Activated CD8-positive, alpha-beta memory T cell treated with anti-CD3 and anti-CD28 coated beads, Interleukin-2, amount 10 ng/mL, durations not matched to agents 7 days and 5 days (primary cell): ENCODE measurements at regions of chr14 and their contacts with region 1.

Region 1: GRCh38 chr14:50060871-50061663 is 55.3 kb downstream of the VCPKMT start:
- DNase-seq: peak; percentile 81
- ATAC-seq: peak; percentile 25
- H3K4me3 Mint-ChIP-seq: peak overlapping the region; percentile 92
- H3K27ac Mint-ChIP-seq: peak overlapping the region; percentile 100
- H3K4me1 Mint-ChIP-seq: peaks cover 82% of the 10 kb centered on the region
- H3K27me3 Mint-ChIP-seq: no peaks in the 10 kb centered on the region

Region 2: DNA sequence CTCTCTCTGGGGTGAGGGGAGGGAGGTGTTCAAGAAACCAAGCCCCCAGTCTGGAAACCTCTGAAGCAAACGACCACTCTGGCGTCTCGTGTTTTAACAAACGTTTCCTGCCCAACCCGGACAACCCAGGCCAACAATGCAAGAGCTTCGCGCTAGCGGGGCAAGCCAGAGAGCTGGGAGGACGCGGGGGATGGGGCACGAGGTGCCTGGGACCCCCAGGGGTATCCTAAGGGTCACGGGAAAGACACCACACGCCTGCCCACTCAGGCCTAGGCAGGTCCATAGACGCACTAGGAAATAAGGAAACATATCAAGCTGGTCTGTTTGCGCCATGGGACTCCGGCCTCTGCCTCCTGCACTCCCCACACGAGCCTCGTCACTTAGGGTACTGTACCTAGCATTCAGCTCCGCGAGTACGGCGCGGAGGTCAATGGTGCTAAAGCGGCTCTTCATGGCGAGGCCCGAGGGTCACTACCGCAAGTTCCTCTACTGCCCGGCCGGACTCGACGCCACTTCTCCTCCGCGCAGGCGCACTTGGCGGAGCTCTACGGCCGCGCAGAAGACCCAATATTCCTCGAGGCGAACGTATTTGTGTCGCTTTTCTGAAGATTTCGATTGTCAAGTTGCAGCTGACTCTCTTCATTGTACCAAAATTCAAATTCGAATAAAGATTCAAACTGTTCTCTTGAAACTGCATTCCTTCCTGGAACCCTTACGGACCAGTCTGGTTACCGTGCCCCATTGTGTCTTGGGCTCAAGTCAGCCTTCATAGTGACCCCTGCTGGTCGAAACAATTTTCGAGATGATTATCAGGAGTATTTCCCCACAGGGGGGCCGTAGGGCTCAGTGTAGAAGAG is 208.5 kb before region 1 on chr14 and contains the start of gene NEMF:
- CTCF ChIA-PET with region 1: interaction called, 23 read pairs
- DNase-seq: peak; percentile 88
- ATAC-seq: peak; percentile 86
- H3K4me3 Mint-ChIP-seq: peak within 1 kb of the TSS; percentile 92
- H3K27ac Mint-ChIP-seq: peak within 1 kb of the TSS; percentile 96
- H3K4me1 Mint-ChIP-seq: peaks cover 43% of the 10 kb centered on the region
- H3K27me3 Mint-ChIP-seq: no peaks in the 10 kb centered on the region
- total RNA-seq, gene NEMF: 78.7 to 82.8 TPM

Region 3: DNA sequence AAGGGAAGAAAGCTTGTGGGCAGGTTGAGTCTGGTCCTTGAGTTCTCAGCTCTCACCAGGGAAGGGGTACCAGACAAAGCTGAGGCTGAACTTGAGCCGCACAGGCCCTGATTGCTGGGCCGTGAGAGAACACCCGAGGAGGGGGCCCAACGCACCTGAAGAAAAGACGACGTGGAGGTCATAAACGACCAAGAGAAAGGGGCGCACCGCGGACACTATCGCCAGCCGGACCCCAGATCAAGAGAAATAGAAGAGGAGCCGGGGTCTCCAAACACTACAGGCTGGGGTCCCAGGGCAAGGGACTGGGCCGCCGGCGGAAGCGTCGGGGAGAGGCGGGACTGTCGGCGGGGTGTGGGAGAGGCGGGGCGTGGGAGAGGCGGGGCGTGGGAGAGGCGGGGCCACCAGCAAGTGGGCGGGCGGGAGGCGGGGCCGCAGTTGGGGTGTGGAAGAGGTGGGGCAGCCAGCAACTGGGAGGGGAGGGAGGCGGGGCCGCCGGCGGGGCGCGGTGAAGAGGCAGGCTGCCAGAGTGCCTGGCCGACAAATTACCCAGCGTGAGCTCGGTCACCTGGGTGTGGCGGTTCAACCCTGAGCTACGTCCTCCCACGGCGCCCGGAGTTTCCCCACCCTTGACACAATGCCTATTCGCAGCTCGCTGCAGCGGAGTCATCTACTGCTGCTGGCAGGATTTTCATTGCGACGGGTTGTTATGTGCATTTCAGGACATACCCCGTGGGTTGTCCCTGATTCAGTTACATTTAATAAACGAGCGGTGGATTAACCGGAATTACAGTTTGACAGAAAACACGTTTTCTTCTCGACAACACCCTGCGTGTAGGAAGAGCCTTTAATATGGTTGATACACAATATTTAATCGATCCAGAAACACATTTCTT is 193.0 kb before region 1 on chr14:
- CTCF ChIA-PET with region 1: interaction called, 59 read pairs
- DNase-seq: peak; percentile 99
- ATAC-seq: peak; percentile 93
- H3K4me3 Mint-ChIP-seq: peak overlapping the region; percentile 98
- H3K27ac Mint-ChIP-seq: peak overlapping the region; percentile 100
- H3K4me1 Mint-ChIP-seq: peaks cover 30% of the 10 kb centered on the region
- H3K27me3 Mint-ChIP-seq: no peaks in the 10 kb centered on the region

Region 4: DNA sequence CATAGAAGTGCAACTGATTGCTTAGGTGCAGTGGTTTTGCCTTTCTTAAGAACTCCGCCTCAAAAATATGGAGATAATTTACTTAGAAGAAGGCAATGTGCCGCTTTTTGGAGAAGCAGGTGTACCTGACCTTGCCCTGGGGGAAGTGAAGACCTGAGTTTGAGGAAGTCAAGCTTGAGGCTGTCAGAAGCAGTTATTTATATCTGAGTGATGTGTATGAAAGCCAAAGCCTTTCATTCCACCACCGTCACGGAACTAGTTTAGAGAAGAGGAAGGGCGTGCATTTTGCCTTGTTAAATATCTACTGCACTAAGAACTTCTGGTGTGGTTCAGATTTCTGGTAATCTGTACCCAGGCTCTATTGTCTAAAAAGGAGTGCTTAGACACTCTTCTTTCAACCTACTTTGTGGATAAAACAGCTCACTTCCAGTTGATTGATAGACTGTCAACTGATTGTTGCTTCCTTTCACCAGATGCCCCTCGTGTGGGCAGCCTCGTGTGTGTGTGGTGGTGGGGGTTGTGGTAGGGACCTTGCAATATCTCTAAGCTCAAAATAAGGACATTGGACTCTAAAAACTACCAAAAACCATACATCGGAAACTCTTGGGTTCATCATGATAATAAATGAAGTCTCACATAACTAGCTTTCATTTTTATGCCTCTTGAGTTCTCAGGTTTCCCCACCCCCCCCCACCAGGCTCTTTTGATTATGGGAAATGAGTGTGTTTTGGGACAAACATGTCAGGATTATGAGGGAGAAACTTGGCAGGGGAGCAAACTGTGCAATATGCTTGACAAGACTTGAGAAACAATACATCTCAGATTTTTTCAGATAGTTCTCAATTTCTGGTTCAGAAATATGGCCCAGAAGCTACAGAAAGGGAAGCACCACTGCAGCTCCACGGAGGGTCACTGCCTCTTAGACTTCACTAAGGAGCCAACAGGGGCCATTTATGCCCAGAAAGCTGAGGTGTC is 89.6 kb before region 1 on chr14:
- CTCF ChIA-PET with region 1: interaction called, 15 read pairs
- DNase-seq: peak; percentile 87
- ATAC-seq: peak; percentile 66
- H3K4me3 Mint-ChIP-seq: peak overlapping the region; percentile 74
- H3K27ac Mint-ChIP-seq: peak overlapping the region; percentile 99
- H3K4me1 Mint-ChIP-seq: peaks cover 67% of the 10 kb centered on the region
- H3K27me3 Mint-ChIP-seq: no peaks in the 10 kb centered on the region

Region 5: DNA sequence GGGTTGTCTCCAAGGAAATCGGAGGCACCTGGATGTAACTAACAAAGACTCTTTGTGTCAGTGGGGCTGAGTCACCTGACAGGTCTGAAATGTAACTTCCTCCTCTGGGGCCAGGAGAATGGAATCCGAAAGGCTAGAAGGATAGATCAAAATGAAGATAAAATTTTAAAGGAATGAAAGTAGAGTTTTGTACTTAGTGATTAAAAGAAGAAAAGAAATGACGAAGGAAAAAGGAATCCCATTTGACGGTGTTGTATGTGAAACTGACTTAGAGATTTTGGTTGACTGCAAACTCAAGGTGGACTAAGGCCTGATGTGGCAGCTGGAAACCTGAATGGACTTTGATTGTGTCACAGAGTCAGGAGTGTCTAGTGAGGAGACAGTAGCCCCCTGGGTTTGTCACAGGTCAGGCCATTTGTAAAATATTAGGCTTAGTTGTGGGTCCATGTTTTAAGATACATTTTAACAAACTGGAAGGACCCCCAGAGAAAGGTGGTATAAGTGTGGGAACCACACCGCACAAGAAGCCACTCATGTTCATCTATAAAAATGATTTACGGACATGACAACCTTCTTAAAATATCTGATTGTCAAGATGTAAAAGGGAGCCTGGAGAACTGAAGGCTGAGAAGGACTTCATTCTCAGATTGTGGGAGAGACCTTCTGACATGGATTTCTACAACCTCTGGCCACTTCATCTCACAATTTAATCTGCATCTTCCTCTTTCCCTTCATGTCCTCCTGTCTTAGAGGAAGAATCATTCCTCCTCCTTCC is 47.3 kb before region 1 on chr14:
- CTCF ChIA-PET with region 1: no interaction called
- DNase-seq: no peak
- ATAC-seq: no peak
- H3K4me3 Mint-ChIP-seq: no peak overlapping the region
- H3K27ac Mint-ChIP-seq: no peak overlapping the region
- H3K4me1 Mint-ChIP-seq: peaks cover 28% of the 10 kb centered on the region
- H3K27me3 Mint-ChIP-seq: no peaks in the 10 kb centered on the region

Region 6: GRCh38 chr14:50045039-50045711 is 15.9 kb before region 1 on chr14:
- CTCF ChIA-PET with region 1: interaction called, 32 read pairs
- DNase-seq: peak; percentile 95
- ATAC-seq: peak; percentile 87
- H3K4me3 Mint-ChIP-seq: peak overlapping the region; percentile 2
- H3K27ac Mint-ChIP-seq: peak overlapping the region; percentile 91
- H3K4me1 Mint-ChIP-seq: peaks cover 63% of the 10 kb centered on the region
- H3K27me3 Mint-ChIP-seq: no peaks in the 10 kb centered on the region

Region 7: GRCh38 chr14:50072395-50072794 is 11.3 kb after region 1 on chr14:
- CTCF ChIA-PET with region 1: no interaction called
- DNase-seq: no peak
- ATAC-seq: no peak
- H3K4me3 Mint-ChIP-seq: no peak overlapping the region
- H3K27ac Mint-ChIP-seq: no peak overlapping the region
- H3K4me1 Mint-ChIP-seq: peaks cover 41% of the 10 kb centered on the region
- H3K27me3 Mint-ChIP-seq: no peaks in the 10 kb centered on the region

Region 8: DNA sequence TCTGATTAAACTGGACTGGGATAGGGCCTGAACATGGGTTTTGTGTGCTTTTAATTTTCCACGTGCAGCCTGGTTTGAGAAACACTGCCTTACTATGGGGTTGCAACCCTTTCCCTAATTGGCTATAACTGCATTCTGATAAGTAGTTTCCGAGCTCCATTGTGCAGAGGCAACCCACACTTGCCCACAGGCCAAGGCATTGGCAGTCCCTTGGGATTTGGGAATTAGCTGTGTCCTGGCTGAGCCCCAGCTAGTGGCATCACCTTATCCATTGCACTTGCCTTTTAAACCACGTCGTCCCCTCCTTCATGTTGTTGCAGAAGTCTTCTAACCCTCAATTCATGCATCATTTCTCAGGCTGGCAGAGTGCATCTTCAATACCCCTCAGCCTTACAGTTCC is 45.1 kb after region 1 on chr14:
- CTCF ChIA-PET with region 1: interaction called, 18 read pairs
- DNase-seq: no peak
- ATAC-seq: no peak
- H3K4me3 Mint-ChIP-seq: no peak overlapping the region
- H3K27ac Mint-ChIP-seq: no peak overlapping the region
- H3K4me1 Mint-ChIP-seq: peaks cover 32% of the 10 kb centered on the region
- H3K27me3 Mint-ChIP-seq: no peaks in the 10 kb centered on the region